OCI-LY7 (cell line): ENCODE measurements at regions of chr1 and their contacts with region 1.

Region 1: GRCh38 chr1:160607011-160607671 is 27.8 kb upstream of the CD84 start:
- DNase-seq: peak; percentile 93
- H3K4me3 ChIP-seq: no peak overlapping the region
- H3K27ac ChIP-seq: peak overlapping the region; percentile 55
- H3K4me1 ChIP-seq: peaks cover 60% of the 10 kb centered on the region
- CTCF ChIP-seq: peak; percentile 98

Region 2: DNA sequence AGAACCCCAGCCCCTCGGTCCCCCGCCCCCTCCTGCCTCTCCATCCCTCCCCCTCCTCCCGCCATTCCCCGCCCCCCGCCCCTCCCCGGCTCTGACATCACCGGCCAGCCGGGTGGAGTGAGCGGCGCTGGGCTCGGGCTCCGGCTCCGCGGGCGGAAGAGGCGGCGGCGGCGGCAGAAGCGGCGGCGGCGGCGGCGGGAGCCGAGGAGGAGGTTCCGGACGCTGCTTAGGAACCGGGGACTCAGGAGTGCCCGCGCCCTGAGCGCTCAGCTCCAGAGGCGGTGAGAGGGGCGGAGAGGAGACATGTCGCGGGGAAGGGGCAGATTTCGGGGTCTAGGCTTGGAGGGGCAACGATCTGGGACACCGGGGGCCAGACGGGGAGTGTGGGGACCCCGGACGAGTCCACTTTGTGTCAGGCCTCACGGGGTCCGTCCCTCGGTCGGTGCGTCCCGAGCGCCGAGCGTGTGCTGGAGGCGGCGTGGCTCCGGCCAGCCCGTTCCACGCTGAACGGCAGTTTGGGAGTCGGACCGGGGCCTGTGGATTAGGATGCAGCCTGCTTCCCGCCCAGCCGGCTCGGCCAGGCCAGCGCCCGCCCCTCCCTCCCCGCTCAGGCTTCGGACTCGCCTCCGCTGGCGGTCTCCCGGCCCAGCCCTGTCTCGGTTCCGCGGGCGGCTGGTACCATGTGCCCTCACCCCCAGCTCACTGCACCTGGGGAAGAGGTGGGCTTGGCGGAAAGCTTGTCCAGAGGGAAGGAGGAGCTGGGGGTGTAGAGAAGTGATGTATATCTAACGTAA is 401.7 kb before region 1 on chr1 and contains the start of gene PEA15:
- CTCF ChIA-PET with region 1: no interaction called
- POLR2A ChIA-PET with region 1: no interaction called
- intact Hi-C with region 1: loop called (anchors 5 kb)
- DNase-seq: peak; percentile 77
- H3K4me3 ChIP-seq: peak within 1 kb of the TSS; percentile 98
- H3K27ac ChIP-seq: peak within 1 kb of the TSS; percentile 81
- H3K4me1 ChIP-seq: peaks cover 44% of the 10 kb centered on the region
- CTCF ChIP-seq: no peak
- total RNA-seq, gene PEA15: 20.7 and 22.3 TPM in 2 replicates

Region 3: DNA sequence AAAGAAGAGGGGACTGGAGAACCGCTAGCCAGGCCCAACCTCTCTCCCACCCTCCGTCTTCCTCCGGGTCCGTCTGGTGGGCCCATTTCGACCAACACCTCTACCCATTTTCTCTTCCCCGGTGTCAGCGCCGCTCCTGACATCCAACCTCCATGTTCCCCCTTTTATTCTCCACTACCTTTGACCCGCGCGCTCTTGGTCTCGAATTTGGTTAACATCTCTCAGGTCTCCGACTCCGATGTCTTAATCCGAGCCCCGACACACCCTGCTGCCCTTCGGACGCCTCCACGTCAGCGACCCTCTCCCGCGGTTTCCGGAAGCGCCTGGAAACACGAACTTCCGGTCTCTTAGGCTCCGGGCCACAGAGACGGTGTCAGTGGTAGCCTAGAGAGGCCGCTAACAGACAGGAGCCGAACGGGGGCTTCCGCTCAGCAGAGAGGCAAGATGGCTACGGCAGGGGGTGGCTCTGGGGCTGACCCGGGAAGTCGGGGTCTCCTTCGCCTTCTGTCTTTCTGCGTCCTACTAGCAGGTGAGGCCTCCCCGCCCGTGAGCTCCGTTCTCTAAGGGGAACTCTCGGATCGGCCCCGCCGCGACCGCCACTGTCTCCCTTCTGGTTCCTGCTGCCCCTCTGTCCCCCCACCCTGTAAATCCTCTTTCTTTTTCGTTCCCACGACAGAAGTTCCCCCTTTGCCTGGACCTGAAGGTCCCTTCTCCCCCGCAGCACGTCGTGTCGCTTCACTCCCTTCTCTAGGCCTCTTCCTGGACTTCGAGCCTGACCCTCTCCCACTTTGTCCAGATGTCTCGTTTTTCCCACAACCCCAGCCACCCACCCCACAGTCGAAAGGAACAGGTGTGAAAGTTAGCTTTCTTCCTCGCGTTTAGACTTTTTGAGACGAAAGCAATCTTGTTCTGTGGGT is 263.9 kb before region 1 on chr1 and contains the starts of genes COPA and NCSTN:
- CTCF ChIA-PET with region 1: no interaction called
- POLR2A ChIA-PET with region 1: no interaction called
- intact Hi-C with region 1: loop called (anchors 5 kb)
- DNase-seq: peak; percentile 97
- H3K4me3 ChIP-seq: peak within 1 kb of the TSS; percentile 87
- H3K27ac ChIP-seq: peak within 1 kb of the TSS; percentile 60
- H3K4me1 ChIP-seq: peaks cover 44% of the 10 kb centered on the region
- CTCF ChIP-seq: no peak
- total RNA-seq, gene COPA: 74.2 and 93.0 TPM in 2 replicates
- total RNA-seq, gene NCSTN: 32.0 and 44.8 TPM in 2 replicates

Region 4: DNA sequence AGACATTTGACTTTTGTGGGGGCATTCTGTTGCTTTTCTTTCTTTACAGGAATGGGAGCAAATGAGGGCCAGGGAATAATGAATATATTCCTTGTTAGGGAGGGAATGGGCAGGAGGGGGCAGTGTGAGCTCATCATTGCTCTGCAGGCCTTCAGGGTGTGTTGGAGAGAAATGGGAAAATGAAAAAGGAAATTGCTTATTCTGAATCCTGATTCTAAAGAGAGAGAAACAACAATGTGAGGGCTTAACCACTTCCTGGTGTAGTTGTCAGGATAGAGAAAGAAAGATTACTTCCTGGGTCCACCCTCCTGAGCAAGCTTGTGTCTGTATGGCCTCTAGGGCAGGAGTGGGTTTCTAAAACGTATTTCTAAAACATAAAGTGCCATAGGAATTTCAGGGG is 178.5 kb before region 1 on chr1:
- CTCF ChIA-PET with region 1: interaction called, 9 read pairs
- POLR2A ChIA-PET with region 1: interaction called, 5 read pairs
- intact Hi-C with region 1: loop called (anchors 1 kb)
- DNase-seq: peak; percentile 81
- H3K4me3 ChIP-seq: peak overlapping the region; percentile 24
- H3K27ac ChIP-seq: peak overlapping the region; percentile 87
- H3K4me1 ChIP-seq: peaks cover 52% of the 10 kb centered on the region
- CTCF ChIP-seq: peak; percentile 99

Region 5: GRCh38 chr1:160489513-160490261 is 117.5 kb before region 1 on chr1:
- CTCF ChIA-PET with region 1: no interaction called
- POLR2A ChIA-PET with region 1: interaction called, 4 read pairs
- intact Hi-C with region 1: loop called (anchors 1 kb)
- DNase-seq: peak; percentile 52
- H3K4me3 ChIP-seq: peak overlapping the region; percentile 22
- H3K27ac ChIP-seq: peak overlapping the region; percentile 97
- H3K4me1 ChIP-seq: peaks cover 75% of the 10 kb centered on the region
- CTCF ChIP-seq: no peak

Region 6: DNA sequence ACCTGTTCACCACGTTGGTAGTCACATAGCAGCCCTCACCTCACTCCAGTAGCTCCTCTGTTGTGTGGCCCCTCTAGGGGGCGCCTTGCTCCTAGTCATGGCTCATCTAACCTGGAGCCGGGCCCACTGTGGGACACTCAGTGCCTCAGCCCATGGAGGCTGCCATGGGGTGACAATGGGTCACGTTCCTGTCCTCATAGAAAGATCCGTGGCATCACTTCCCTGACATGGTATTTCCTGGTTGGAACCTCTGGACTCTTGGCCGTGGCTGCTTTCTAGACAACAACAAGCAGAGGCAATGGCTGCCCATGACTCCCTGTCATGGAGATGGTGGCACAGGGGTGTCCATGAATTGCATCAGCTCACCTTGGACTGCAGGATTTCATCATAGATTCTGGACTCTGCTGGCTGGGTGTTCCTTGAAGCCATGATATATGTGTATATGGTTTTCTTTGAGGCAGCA is 56.5 kb before region 1 on chr1:
- CTCF ChIA-PET with region 1: interaction called, 4 read pairs
- POLR2A ChIA-PET with region 1: no interaction called
- intact Hi-C with region 1: loop called (anchors 1 kb)
- DNase-seq: peak; percentile 67
- H3K4me3 ChIP-seq: no peak overlapping the region
- H3K27ac ChIP-seq: peak overlapping the region; percentile 86
- H3K4me1 ChIP-seq: peaks cover 74% of the 10 kb centered on the region
- CTCF ChIP-seq: peak; percentile 82

Region 7: GRCh38 chr1:160618763-160619274 is 11.7 kb after region 1 on chr1:
- CTCF ChIA-PET with region 1: interaction called, 3 read pairs
- POLR2A ChIA-PET with region 1: interaction called, 17 read pairs
- intact Hi-C with region 1: no loop called
- DNase-seq: peak; percentile 59
- H3K4me3 ChIP-seq: no peak overlapping the region
- H3K27ac ChIP-seq: no peak overlapping the region
- H3K4me1 ChIP-seq: peaks cover 72% of the 10 kb centered on the region
- CTCF ChIP-seq: peak; percentile 90

Region 8: GRCh38 chr1:160916666-160917065 is 309.5 kb after region 1 on chr1:
- CTCF ChIA-PET with region 1: no interaction called
- POLR2A ChIA-PET with region 1: no interaction called
- intact Hi-C with region 1: no loop called
- DNase-seq: no peak
- H3K4me3 ChIP-seq: no peak overlapping the region
- H3K27ac ChIP-seq: no peak overlapping the region
- H3K4me1 ChIP-seq: no peaks in the 10 kb centered on the region
- CTCF ChIP-seq: no peak